ENCODE measurements at regions of chr1 and their contacts with region 1.

Region 1: DNA sequence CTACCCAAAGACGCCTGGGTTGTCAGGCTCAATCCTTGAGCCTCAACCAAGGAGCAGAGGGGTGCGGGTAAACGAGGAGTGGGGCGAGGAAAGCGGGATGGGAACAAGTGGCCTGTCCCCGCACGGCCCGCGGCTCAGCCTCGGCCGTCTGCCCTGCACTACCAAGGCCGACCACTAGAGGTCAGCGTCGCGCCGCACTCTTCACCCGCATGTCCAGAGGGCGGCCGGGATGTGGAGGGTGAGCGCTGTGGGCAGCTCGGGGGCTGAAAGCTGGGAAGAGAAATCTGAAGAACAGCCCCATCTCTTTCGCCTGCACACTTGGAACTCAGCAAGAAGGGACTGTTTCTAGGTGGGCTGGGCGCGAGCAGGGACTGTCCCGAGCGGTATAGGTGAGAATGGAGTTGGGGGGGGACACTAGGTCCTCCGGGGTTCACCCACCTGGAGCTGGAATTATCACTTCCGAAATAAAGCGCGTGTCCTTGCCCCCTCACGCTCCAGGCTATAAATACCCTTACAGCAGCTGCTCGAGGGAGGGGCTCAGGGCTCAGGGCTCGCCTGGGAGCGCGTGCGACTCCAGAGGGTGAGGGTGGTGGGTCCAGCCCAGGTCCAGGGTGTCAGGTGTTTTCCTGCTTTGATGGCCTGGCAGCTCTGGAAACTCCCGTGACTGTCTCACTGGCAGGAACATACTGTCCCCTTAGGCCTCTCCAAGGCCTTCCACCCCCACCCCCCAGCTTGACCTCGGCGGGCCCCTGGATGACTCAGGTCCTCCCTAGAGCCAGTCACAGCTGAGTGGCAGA is 9.8 kb downstream of the SLC30A2 start:
- DNase-seq: peak; percentile 53 to 85
- H3K4me3 ChIP-seq: peak overlapping the region; percentile 85
- H3K27ac ChIP-seq: no peak overlapping the region
- H3K4me1 ChIP-seq: peaks cover 9% of the 10 kb centered on the region
- H3K27me3 ChIP-seq: no peaks in the 10 kb centered on the region
- CTCF ChIP-seq: peak; percentile 94

Region 2: GRCh38 chr1:25952841-25953401 is 83.2 kb before region 1 on chr1:
- CTCF ChIA-PET with region 1: no interaction called
- POLR2A ChIA-PET with region 1: no interaction called
- intact Hi-C with region 1: no loop called
- DNase-seq: no peak
- H3K4me3 ChIP-seq: no peak overlapping the region
- H3K27ac ChIP-seq: no peak overlapping the region
- H3K4me1 ChIP-seq: no peaks in the 10 kb centered on the region
- H3K27me3 ChIP-seq: no peaks in the 10 kb centered on the region
- CTCF ChIP-seq: no peak

Region 3: DNA sequence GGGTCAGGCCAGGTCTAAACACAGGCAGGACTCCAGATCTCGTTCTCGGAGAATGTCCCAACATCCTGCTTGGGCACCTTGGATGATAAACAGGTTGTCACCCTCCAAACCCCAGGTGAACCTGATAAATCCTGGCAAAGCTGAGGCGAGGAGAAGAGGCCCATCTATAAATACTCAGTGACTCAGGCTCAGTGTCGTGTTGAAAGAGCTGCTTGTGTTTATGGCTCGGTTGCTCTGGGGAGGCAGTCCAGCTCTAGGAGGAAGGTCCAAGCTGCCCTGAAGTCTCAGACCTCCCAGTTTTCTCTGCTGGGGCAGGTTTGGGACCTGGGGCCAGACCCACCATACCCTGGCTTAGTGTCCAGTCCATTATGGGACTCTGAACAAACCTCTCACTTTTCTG is 47.1 kb after region 1 on chr1:
- CTCF ChIA-PET with region 1: interaction called, 11 read pairs
- POLR2A ChIA-PET with region 1: no interaction called
- intact Hi-C with region 1: no loop called
- DNase-seq: peak in 1 of 2 experiments; percentile 85
- H3K4me3 ChIP-seq: 0 out of 2 replicates have a peak overlapping the region, but pooled peaks have one; percentile 10
- H3K27ac ChIP-seq: peak overlapping the region; percentile 38
- H3K4me1 ChIP-seq: peaks cover 47% of the 10 kb centered on the region
- H3K27me3 ChIP-seq: no peaks in the 10 kb centered on the region
- CTCF ChIP-seq: no peak

Region 4: GRCh38 chr1:26102526-26102925 is 66.4 kb after region 1 on chr1:
- CTCF ChIA-PET with region 1: interaction called, 3 read pairs
- POLR2A ChIA-PET with region 1: no interaction called
- intact Hi-C with region 1: loop called (anchors 2 kb)
- DNase-seq: no peak
- H3K4me3 ChIP-seq: no peak overlapping the region
- H3K27ac ChIP-seq: no peak overlapping the region
- H3K4me1 ChIP-seq: peaks cover 11% of the 10 kb centered on the region
- H3K27me3 ChIP-seq: no peaks in the 10 kb centered on the region
- CTCF ChIP-seq: no peak

Region 5: DNA sequence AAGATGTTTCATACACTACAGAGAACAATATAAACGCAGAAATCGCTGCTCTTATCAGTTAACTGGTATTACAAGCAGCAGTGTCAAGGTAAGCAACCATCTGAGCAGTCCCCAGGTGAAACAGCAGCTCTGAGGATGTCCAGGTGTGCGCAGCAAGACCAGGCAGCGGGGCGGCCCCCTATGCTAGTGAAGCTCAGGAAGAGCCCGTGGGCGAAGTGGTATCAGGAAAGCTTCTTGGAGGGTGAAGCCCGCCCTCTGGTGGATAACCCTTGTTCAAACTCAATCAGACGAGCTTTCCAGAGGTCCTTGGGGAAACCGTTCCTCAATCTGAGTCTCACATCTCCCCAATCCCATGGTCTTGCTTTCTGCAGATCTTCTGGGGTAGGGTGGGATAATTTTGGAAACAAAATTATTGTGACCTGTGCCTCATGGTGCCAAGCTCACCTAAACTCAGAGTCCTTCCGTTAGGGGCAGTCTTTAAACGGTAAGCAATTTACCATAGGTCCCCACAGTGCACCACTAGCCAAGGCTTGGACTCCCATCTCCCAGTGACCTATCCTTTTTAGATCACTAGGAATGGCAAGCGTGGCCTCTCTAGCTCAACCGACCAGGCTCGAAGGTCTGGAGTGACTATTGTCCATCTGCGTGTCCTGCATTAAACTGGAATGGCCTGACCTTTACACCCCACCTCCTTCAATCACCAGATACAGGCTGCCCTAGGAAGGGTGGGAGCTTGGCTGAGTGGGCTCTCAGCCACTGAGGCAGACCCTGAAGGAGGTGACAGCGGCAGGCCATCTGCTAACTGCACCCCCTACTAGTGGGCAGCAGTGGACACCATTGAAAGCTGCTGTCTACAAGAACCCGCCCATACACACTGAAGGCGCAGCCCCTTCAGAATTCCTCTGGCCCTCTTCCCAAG is 109.1 kb after region 1 on chr1:
- CTCF ChIA-PET with region 1: interaction called, 20 read pairs
- POLR2A ChIA-PET with region 1: no interaction called
- intact Hi-C with region 1: loop called (anchors 1 kb)
- DNase-seq: peak; percentile 70 to 71
- H3K4me3 ChIP-seq: no peak overlapping the region
- H3K27ac ChIP-seq: no peak overlapping the region
- H3K4me1 ChIP-seq: no peaks in the 10 kb centered on the region
- H3K27me3 ChIP-seq: no peaks in the 10 kb centered on the region
- CTCF ChIP-seq: peak; percentile 82

Region 6: GRCh38 chr1:26161415-26162219 is 125.5 kb after region 1 on chr1:
- CTCF ChIA-PET with region 1: no interaction called
- POLR2A ChIA-PET with region 1: no interaction called
- intact Hi-C with region 1: loop called (anchors 5 kb)
- DNase-seq: peak in 1 of 2 experiments; percentile 70
- H3K4me3 ChIP-seq: peak overlapping the region; percentile 56; the same call in 1 of the 2 replicates
- H3K27ac ChIP-seq: no peak overlapping the region
- H3K4me1 ChIP-seq: peaks cover 3% of the 10 kb centered on the region; the same call in 1 of the 2 replicates
- H3K27me3 ChIP-seq: peaks cover 18% of the 10 kb centered on the region
- CTCF ChIP-seq: no peak

Region 7: GRCh38 chr1:26233903-26234643 is 197.9 kb after region 1 on chr1 and contains the start of gene CEP85:
- CTCF ChIA-PET with region 1: no interaction called
- POLR2A ChIA-PET with region 1: no interaction called
- intact Hi-C with region 1: loop called (anchors 1 kb)
- DNase-seq: peak; percentile 89 to 98
- H3K4me3 ChIP-seq: peak within 1 kb of the TSS; percentile 84
- H3K27ac ChIP-seq: 0 out of 2 replicates have a peak within 1 kb of the TSS, but pooled peaks have one; percentile 16
- H3K4me1 ChIP-seq: peaks cover 31% of the 10 kb centered on the region
- H3K27me3 ChIP-seq: no peaks in the 10 kb centered on the region
- CTCF ChIP-seq: peak; percentile 80
- total RNA-seq, gene CEP85: 34.0 and 42.5 TPM in 2 replicates

Region 8: DNA sequence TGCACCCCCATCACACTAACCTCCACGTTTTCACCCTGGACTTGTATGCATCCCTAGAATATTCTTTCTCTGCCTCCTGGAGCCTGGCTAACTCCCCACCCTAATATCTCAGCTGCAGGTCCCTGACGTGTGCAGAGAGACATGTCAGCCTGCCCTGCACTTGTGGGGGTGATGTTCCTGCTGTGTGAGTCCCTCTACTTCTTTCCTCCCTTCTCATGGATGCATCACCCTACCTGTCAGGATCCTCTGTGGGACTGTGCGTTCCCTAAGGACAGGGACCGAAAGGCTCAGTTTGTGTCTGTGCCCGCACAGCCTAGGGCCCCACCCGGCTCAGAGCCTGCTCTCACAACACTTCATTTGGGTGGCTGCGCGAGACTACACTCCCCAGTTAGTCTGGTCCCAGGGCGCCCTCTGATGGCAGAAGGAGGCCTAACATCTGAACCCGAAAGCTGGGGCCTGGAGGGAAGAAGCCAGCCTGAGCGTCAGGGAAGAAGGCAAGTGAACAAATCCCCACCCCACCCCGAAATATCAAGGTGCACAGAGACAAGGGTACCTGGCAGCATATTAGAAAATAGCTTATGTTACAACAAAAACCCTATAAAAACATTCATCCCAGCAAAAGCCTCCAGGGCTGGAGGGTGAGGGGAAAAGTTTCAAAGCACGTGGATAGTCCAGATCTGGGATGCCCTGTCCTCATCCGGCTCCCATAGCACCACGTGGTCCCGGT is 285.3 kb after region 1 on chr1:
- CTCF ChIA-PET with region 1: no interaction called
- POLR2A ChIA-PET with region 1: no interaction called
- intact Hi-C with region 1: loop called (anchors 5 kb)
- DNase-seq: peak; percentile 42 to 86
- H3K4me3 ChIP-seq: no peak overlapping the region
- H3K27ac ChIP-seq: no peak overlapping the region
- H3K4me1 ChIP-seq: no peaks in the 10 kb centered on the region
- H3K27me3 ChIP-seq: no peaks in the 10 kb centered on the region
- CTCF ChIP-seq: peak; percentile 80